Dorsolateral prefrontal cortex (tissue), 120 donors: ENCODE measurements at regions of chr16 and their contacts with region 1.

Region 1: DNA sequence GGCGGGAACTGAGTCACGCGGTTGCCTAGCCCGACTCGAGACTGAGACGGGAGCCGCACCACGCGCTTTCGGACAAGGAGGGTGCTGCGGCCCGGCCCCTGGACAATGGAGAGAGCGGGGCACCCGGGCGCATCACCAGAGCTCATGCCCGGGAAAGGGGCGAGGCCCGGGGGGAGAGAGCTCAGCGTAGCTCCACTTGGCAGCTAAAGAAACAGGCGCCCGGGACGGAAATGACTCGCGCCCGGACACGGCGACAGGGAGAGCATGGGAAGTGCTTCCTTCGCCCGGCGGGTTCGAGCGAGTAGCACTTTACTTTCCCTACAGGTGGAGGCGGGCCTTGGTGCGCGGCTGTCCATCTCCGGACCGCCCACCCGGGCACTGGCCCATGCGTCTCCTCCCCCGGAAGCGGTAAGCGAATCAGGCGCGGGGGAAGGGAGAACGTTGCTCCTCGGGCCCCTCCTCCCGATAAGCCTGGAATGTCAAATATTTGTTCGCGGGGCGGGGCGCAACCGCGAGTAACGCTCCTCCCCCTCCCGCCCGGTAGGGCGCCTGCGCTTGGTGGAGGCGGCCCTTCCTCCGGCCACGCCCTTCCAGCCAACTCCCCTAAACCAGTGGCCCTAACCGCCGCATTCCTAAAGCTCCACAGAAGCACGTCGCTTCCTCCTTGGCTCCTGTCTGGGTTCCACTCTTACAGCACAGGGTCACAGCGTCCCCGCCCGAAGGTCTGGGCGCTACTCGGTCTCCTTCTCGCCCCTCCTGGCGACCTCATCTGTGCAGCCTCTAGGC is 1.5 kb upstream of the ESRP2 start:
- DNase-seq: peak; percentile 92 to 98 (median 96)
- H3K4me3 ChIP-seq: peak overlapping the region; percentile 51 to 93 (median 75)
- H3K27ac ChIP-seq: peak overlapping the region; percentile 20 to 91 (median 79)
- H3K27me3 ChIP-seq: no peaks in the 10 kb centered on the region
- CTCF ChIP-seq: peak in 27 of 56 donors; percentile 6 to 60 (median 29)

Region 2: DNA sequence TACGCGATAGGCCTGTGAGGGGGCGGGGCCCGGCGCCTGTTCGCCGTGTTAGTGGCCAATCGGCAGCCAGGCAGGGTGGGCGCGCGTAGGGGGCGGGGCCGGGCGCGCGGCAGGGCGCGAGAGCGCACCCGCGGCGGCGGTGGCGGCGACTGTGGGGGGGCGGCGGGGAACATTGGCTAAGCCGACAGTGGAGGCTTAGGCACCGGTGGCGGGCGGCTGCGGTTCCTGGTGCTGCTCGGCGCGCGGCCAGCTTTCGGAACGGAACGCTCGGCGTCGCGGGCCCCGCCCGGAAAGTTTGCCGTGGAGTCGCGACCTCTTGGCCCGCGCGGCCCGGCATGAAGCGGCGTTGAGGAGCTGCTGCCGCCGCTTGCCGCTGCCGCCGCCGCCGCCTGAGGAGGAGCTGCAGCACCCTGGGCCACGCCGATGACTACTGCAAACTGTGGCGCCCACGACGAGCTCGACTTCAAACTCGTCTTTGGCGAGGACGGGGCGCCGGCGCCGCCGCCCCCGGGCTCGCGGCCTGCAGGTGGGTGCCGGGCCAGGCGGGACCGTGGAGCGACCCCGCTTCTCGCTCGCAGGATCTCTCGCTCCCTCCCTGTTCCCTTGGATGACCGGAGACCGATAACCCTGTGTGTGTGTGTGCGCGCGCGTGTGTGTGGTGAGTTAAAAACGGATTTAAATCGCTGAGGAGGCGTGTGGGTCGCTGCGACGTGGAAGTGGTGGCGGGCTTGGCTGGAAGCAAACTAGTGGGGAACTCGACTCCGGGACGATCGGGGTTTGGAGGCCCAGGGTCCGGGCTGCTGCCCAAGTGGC is 152.0 kb before region 1 on chr16 and contains the start of gene NFATC3:
- intact Hi-C with region 1: loop called (anchors 2 to 5 kb)
- DNase-seq: peak; percentile 95 to 99 (median 98)
- H3K4me3 ChIP-seq: peak within 1 kb of the TSS; percentile 71 to 97 (median 85)
- H3K27ac ChIP-seq: peak within 1 kb of the TSS; percentile 91 to 100 (median 99)
- H3K27me3 ChIP-seq: no peaks in the 10 kb centered on the region
- CTCF ChIP-seq: peak in 23 of 56 donors; percentile 6 to 39 (median 23)
- total RNA-seq, gene NFATC3: 30.0 to 60.4 (median 40.8) TPM